ENCODE measurements at regions of chr2 and their contacts with region 1.

Region 1: GRCh38 chr2:181077128-181077709 is 96.8 kb downstream of the UBE2E3 start:
- DNase-seq: peak; percentile 6
- H3K4me3 Mint-ChIP-seq: no peak overlapping the region
- H3K27ac Mint-ChIP-seq: no peak overlapping the region
- H3K4me1 Mint-ChIP-seq: no peaks in the 10 kb centered on the region
- H3K27me3 Mint-ChIP-seq: no peaks in the 10 kb centered on the region
- CTCF ChIP-seq: peak; percentile 65

Region 2: GRCh38 chr2:181466661-181467576 is 389.7 kb after region 1 on chr2:
- CTCF ChIA-PET with region 1: no interaction called
- intact Hi-C with region 1: loop called (anchors 10 kb)
- DNase-seq: peak; percentile 70
- H3K4me3 Mint-ChIP-seq: no peak overlapping the region
- H3K27ac Mint-ChIP-seq: no peak overlapping the region
- H3K4me1 Mint-ChIP-seq: no peaks in the 10 kb centered on the region
- H3K27me3 Mint-ChIP-seq: no peaks in the 10 kb centered on the region
- CTCF ChIP-seq: peak; percentile 89

Region 3: GRCh38 chr2:181814064-181814491 is 736.9 kb after region 1 on chr2:
- CTCF ChIA-PET with region 1: no interaction called
- intact Hi-C with region 1: no loop called
- DNase-seq: no peak
- H3K4me3 Mint-ChIP-seq: no peak overlapping the region
- H3K27ac Mint-ChIP-seq: peak overlapping the region; percentile 95
- H3K4me1 Mint-ChIP-seq: peaks cover 78% of the 10 kb centered on the region
- H3K27me3 Mint-ChIP-seq: no peaks in the 10 kb centered on the region
- CTCF ChIP-seq: no peak